CD14-positive monocyte (primary cell): ENCODE measurements at regions of chr2 and their contacts with region 1.

Region 1: GRCh38 chr2:151902829-151903228 is 74.6 kb upstream of the ARL5A start:
- DNase-seq: no peak
- H3K4me3 ChIP-seq: no peak overlapping the region
- H3K4me3 Mint-ChIP-seq: no peak overlapping the region
- H3K27ac ChIP-seq: no peak overlapping the region
- H3K27ac Mint-ChIP-seq: no peak overlapping the region
- H3K4me1 ChIP-seq: peaks cover 51 to 66% of the 10 kb centered on the region in 2 donors
- H3K4me1 Mint-ChIP-seq: peaks cover 42% of the 10 kb centered on the region
- H3K27me3 ChIP-seq: no peaks in the 10 kb centered on the region
- H3K27me3 Mint-ChIP-seq: peaks cover 0 to 2% (median 0%) of the 10 kb centered on the region in 3 donors
- CTCF ChIP-seq: no peak

Region 2: GRCh38 chr2:151916632-151917031 is 13.8 kb after region 1 on chr2:
- intact Hi-C with region 1: loop called in 1 of 2 experiments (anchors 2 kb)
- DNase-seq: no peak
- H3K4me3 ChIP-seq: no peak overlapping the region
- H3K4me3 Mint-ChIP-seq: no peak overlapping the region
- H3K27ac ChIP-seq: peak overlapping the region in 1 of 2 donors; percentile 63
- H3K27ac Mint-ChIP-seq: peak overlapping the region in 1 of 7 donors; percentile 26
- H3K4me1 ChIP-seq: peaks cover 91 to 97% of the 10 kb centered on the region in 2 donors
- H3K4me1 Mint-ChIP-seq: peaks cover 89% of the 10 kb centered on the region
- H3K27me3 ChIP-seq: no peaks in the 10 kb centered on the region
- H3K27me3 Mint-ChIP-seq: peaks cover 0 to 1% (median 0%) of the 10 kb centered on the region in 3 donors
- CTCF ChIP-seq: no peak